HEK293 (cell line): ENCODE measurements at regions of chr6 and their contacts with region 1.

Region 1: DNA sequence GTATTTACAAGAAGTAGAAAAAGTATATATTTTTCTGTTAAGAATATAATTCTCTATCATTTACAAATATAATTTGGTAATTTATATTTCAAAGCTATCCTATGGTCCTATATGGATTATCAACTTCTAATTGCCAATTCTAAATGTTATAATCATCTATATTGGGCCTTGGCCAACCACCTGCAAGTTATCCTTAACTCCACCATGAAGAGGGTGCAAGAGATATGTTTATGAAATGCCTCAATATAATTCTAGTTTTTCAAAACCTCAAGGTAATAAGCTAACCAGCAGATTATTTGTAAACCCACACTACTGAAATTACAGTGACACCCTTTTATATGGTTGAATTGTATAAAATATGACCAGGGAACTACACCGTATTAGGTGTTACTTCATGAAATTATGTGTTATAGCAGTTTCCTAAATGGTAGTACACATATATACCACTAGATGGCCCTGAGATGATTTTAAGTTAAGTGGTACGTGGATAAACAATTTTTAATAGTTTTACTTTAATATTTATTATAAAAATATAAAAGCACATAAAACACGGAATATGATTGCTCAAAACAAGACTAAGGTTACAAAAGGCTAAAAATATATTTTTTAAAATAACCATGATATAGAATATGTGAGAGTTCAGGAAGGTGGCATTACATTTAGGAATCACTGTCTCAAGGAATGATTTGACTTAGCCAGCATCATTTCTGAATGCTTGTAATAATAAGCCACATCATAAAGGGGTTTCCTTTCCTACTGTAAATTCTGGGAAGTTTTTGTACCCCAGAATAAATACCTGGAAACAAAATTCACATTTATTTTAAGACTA is 9.8 kb upstream of the PNISR start:
- H3K4me3 ChIP-seq: no peak overlapping the region
- H3K27ac ChIP-seq: no peak overlapping the region
- H3K4me1 ChIP-seq: no peaks in the 10 kb centered on the region
- CTCF ChIP-seq: no peak

Region 2: DNA sequence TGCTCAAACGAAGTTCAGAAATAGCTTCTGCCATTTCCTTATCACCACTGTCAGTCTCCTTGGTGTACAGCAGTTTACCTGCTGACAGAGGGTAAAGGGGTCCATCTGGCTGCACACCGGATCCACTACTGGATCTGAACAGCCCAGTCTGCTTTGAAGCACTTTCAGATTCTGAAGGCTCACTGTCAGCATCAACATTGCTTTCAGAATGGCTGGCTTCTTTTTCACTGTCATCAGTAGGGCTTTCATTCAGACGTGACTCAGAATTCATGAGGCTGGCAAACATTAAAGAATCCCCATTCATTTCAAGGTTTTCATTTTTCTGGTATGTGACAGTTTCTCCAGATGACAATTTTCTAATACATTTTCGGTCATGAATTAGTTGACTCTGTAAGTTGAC is 11.2 kb after region 1 on chr6:
- CTCF ChIA-PET with region 1: interaction called, 10 read pairs
- POLR2A ChIA-PET with region 1: no interaction called
- H3K4me3 ChIP-seq: no peak overlapping the region
- H3K27ac ChIP-seq: no peak overlapping the region
- H3K4me1 ChIP-seq: no peaks in the 10 kb centered on the region
- CTCF ChIP-seq: no peak